CD14-positive monocyte (primary cell): ENCODE measurements at regions of chr16 and their contacts with region 1.

Region 1: DNA sequence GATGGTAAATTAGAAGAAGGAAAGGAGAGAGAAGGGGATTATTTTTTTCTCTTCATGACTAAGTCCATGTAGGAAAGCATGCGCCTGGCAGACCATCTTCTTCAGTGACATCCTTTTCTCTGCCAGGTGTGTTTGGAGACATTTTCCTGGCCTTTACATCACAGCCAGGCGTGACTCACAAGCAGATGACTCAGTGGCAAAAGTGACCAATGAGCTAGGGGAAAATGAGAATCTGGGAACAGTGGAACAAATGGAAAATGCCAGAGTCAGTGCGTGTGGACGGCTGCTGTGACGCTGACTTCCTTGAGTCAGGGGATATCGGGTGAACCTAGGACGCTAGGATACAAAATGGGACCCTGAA is 9.4 kb downstream of the KIAA0513 start:
- DNase-seq: peak in 1 of 3 donors; percentile 53
- H3K4me3 ChIP-seq: no peak overlapping the region
- H3K4me3 Mint-ChIP-seq: no peak overlapping the region
- H3K27ac ChIP-seq: peak overlapping the region in 1 of 2 donors; percentile 63
- H3K27ac Mint-ChIP-seq: peak overlapping the region in 5 of 7 donors; percentile 68 to 90 (median 78)
- H3K4me1 ChIP-seq: peaks cover 25 to 29% of the 10 kb centered on the region in 2 donors
- H3K4me1 Mint-ChIP-seq: peaks cover 50% of the 10 kb centered on the region
- H3K27me3 ChIP-seq: no peaks in the 10 kb centered on the region
- H3K27me3 Mint-ChIP-seq: peaks cover 0 to 2% (median 1%) of the 10 kb centered on the region in 3 donors
- CTCF ChIP-seq: no peak

Region 2: DNA sequence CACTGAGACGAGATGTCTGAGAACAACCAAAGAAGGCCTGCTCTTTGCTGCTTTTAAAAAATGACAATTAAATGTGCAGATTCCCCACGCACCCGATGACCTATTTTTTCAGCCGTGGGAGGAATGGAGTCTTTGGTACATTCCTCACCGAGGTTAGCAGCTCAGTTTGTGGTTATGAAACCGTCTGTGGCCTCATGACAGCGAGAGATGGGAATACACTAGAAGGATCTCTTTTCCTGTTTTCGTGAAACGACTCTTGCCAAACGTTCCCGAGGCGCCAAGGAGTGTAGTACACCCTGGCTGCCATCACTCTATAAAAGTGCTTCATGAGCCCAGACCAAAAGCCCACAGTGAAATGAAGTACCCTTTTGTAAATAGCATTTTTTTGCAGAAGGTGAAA is 129.5 kb before region 1 on chr16:
- intact Hi-C with region 1: no loop called
- DNase-seq: peak; percentile 15 to 75 (median 66)
- H3K4me3 ChIP-seq: peak overlapping the region in 1 of 3 experiments; percentile 2
- H3K4me3 Mint-ChIP-seq: peak overlapping the region in 1 of 2 donors; percentile 50
- H3K27ac ChIP-seq: peak overlapping the region; percentile 31 to 50
- H3K27ac Mint-ChIP-seq: peak overlapping the region; percentile 72 to 80 (median 76)
- H3K4me1 ChIP-seq: peaks cover 66 to 67% of the 10 kb centered on the region in 2 donors
- H3K4me1 Mint-ChIP-seq: peaks cover 66% of the 10 kb centered on the region
- H3K27me3 ChIP-seq: no peaks in the 10 kb centered on the region
- H3K27me3 Mint-ChIP-seq: peaks cover 2 to 9% (median 4%) of the 10 kb centered on the region in 3 donors
- CTCF ChIP-seq: no peak

Region 3: DNA sequence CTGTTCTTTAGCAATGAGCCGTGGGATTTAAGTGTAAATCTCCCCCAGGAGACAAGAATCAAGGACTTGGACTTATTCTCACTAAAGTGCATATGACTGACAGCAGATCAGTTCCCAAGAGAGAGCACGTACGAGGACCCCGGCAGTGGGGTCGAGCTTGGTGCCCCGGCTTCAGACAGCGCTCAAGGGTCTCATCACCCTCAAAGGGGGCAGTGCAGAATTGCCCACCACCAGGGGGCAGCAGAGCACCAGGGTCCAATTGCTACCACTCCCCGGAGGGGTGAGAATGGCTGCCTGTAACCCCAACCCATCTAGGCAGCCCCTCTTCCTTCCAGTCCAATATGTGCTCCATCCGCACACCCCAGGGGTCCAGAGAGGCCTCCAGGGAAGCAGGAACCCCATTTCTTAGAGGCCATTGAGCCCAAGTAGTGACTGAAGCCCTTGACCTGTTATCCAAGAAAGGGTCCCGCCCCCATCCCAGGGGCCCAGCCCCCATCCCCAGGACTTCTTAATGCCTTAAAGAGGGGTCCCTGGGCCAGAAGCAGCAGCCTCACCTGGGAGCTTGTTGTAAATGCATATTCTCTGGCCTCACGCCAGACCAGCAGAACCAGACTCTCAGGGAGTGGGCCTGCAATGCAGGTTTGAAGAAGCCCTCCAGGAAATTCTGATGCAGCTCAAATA is 111.8 kb before region 1 on chr16:
- intact Hi-C with region 1: no loop called
- DNase-seq: peak; percentile 42 to 71 (median 67)
- H3K4me3 ChIP-seq: no peak overlapping the region
- H3K4me3 Mint-ChIP-seq: no peak overlapping the region
- H3K27ac ChIP-seq: no peak overlapping the region
- H3K27ac Mint-ChIP-seq: no peak overlapping the region
- H3K4me1 ChIP-seq: peaks cover 4 to 28% of the 10 kb centered on the region in 2 donors
- H3K4me1 Mint-ChIP-seq: peaks cover 19% of the 10 kb centered on the region
- H3K27me3 ChIP-seq: no peaks in the 10 kb centered on the region
- H3K27me3 Mint-ChIP-seq: peaks cover 4 to 9% (median 7%) of the 10 kb centered on the region in 3 donors
- CTCF ChIP-seq: peak; percentile 98

Region 4: DNA sequence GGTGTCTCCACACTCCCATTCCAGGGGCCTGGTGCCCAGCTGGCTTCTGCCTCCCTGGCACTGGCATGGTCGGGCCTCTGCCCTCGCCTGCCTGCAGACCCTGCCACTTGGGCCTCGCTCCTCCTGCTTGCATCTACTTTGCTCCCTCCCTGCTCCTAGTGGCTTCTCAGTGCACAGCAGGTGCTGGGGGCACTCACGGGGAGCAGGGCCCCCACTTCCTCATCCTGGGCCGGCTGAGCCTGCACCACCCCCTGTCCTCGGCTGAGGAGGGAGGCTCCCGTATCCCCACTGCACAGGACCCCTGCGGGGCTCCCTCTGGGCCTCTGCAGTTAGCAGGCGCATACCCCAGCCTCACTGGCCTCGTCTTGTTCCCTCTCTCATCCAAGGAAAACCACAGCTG is 40.0 kb after region 1 on chr16:
- intact Hi-C with region 1: loop called (anchors 5 to 10 kb)
- DNase-seq: peak; percentile 24 to 35 (median 29)
- H3K4me3 ChIP-seq: no peak overlapping the region
- H3K4me3 Mint-ChIP-seq: no peak overlapping the region
- H3K27ac ChIP-seq: no peak overlapping the region
- H3K27ac Mint-ChIP-seq: peak overlapping the region in 2 of 7 donors; percentile 58 to 77
- H3K4me1 ChIP-seq: peaks cover 30 to 46% of the 10 kb centered on the region in 2 donors
- H3K4me1 Mint-ChIP-seq: peaks cover 27% of the 10 kb centered on the region
- H3K27me3 ChIP-seq: no peaks in the 10 kb centered on the region
- H3K27me3 Mint-ChIP-seq: peaks cover 2 to 6% (median 3%) of the 10 kb centered on the region in 3 donors
- CTCF ChIP-seq: peak; percentile 48

Region 5: DNA sequence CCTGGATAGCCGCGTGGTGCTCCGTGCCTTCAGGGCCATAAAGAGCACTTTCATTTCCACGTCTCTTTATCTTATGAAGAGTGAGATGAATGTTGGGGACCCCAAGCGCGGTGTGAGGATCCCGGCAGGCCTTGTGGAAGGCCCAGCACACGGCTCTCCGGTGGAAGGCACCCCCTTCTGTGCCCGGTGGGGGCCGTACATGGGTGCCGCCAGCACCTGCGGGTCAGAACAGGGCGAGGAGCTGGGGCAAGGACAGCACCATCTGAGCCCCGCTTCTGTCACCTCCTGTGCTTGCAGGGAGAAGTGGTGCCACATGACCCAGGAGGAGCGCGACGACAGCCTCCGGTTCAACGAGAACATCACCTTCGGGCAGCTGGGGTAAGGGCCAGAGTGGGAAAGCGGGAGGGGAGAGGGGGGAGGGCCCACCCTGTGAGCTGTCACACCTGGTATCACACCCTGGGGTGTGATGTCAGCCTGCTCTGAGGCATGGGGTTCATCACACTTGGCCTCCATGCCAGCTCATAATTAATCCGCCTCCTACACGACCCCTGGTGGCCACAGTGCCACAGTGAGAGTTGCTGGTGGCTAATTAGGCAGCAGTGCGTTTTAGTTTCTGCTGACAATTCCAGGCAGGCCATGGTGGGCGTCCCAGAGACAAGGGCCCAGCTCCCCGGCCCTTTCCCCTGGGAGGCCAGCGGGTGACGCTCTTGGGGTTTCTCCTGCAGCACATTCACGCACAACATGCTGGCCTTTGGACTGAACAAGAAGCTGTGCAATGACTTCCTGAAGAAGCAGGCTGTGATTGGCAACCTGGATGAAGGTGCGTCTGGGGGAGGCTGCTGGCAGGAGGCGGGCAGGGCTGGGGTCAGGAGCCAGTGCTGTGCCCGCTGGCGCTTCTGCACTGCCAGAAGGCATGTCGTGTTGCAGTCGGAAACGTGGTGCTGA is 49.6 kb after region 1 on chr16:
- intact Hi-C with region 1: loop called in 1 of 2 experiments (anchors 10 kb)
- DNase-seq: peak; percentile 61 to 63 (median 63)
- H3K4me3 ChIP-seq: no peak overlapping the region
- H3K4me3 Mint-ChIP-seq: no peak overlapping the region
- H3K27ac ChIP-seq: peak overlapping the region in 1 of 2 donors; percentile 50
- H3K27ac Mint-ChIP-seq: peak overlapping the region in 1 of 7 donors; percentile 2
- H3K4me1 ChIP-seq: peaks cover 39 to 56% of the 10 kb centered on the region in 2 donors
- H3K4me1 Mint-ChIP-seq: peaks cover 52% of the 10 kb centered on the region
- H3K27me3 ChIP-seq: no peaks in the 10 kb centered on the region
- H3K27me3 Mint-ChIP-seq: peaks cover 0 to 6% (median 1%) of the 10 kb centered on the region in 3 donors
- CTCF ChIP-seq: peak; percentile 75